HepG2 (cell line): ENCODE measurements at regions of chr6 and their contacts with region 1.

Region 1: GRCh38 chr6:15245361-15246216 is at the start of gene JARID2:
- DNase-seq: peak; percentile 97
- ATAC-seq: peak; percentile 81
- H3K4me3 ChIP-seq: peak within 1 kb of the TSS; percentile 94 to 99 (median 96)
- H3K27ac ChIP-seq: peak within 1 kb of the TSS; percentile 93
- H3K4me1 ChIP-seq: peaks cover 37% of the 10 kb centered on the region
- H3K27me3 ChIP-seq: peaks cover 0 to 15% of the 10 kb centered on the region in 2 experiments; a peak in 3 of 5 replicates
- CTCF ChIP-seq: 0 out of 2 replicates have a peak, but pooled peaks have one; percentile 3
- EP300 ChIP-seq: no peak
- POLR2A ChIP-seq: peak; percentile 73 to 76
- RAD21 ChIP-seq: peak; percentile 44; the same call in 1 of the 2 replicates
- total RNA-seq, gene JARID2: 10.0 and 10.3 TPM in 2 replicates

Region 2: GRCh38 chr6:15036690-15037245 is 208.8 kb before region 1 on chr6:
- CTCF ChIA-PET with region 1: no interaction called
- POLR2A ChIA-PET with region 1: no interaction called
- in situ Hi-C with region 1: no loop called
- intact Hi-C with region 1: loop called (anchors 10 kb)
- DNase-seq: peak; percentile 59
- ATAC-seq: peak; percentile 87
- H3K4me3 ChIP-seq: peak overlapping the region in 2 of 3 experiments; percentile 0 to 42; a peak in 2 of 6 replicates
- H3K27ac ChIP-seq: no peak overlapping the region
- H3K4me1 ChIP-seq: peaks cover 27% of the 10 kb centered on the region
- H3K27me3 ChIP-seq: no peaks in the 10 kb centered on the region
- CTCF ChIP-seq: no peak
- EP300 ChIP-seq: no peak
- POLR2A ChIP-seq: no peak
- RAD21 ChIP-seq: no peak

Region 3: GRCh38 chr6:15327271-15327670 is 81.7 kb after region 1 on chr6:
- CTCF ChIA-PET with region 1: no interaction called
- POLR2A ChIA-PET with region 1: no interaction called
- in situ Hi-C with region 1: no loop called
- intact Hi-C with region 1: loop called (anchors 5 kb)
- DNase-seq: no peak
- ATAC-seq: no peak
- H3K4me3 ChIP-seq: no peak overlapping the region
- H3K27ac ChIP-seq: no peak overlapping the region
- H3K4me1 ChIP-seq: peaks cover 59% of the 10 kb centered on the region
- H3K27me3 ChIP-seq: no peaks in the 10 kb centered on the region
- CTCF ChIP-seq: no peak
- EP300 ChIP-seq: no peak
- POLR2A ChIP-seq: no peak
- RAD21 ChIP-seq: no peak

Region 4: GRCh38 chr6:15441215-15441868 is 195.8 kb after region 1 on chr6:
- CTCF ChIA-PET with region 1: interaction called, 4 read pairs
- POLR2A ChIA-PET with region 1: no interaction called
- in situ Hi-C with region 1: no loop called
- intact Hi-C with region 1: loop called (anchors 5 kb)
- DNase-seq: peak; percentile 65
- ATAC-seq: peak; percentile 82
- H3K4me3 ChIP-seq: no peak overlapping the region
- H3K27ac ChIP-seq: no peak overlapping the region
- H3K4me1 ChIP-seq: peaks cover 15% of the 10 kb centered on the region
- H3K27me3 ChIP-seq: no peaks in the 10 kb centered on the region
- CTCF ChIP-seq: peak; percentile 81
- EP300 ChIP-seq: no peak
- POLR2A ChIP-seq: no peak
- RAD21 ChIP-seq: peak; percentile 69